CD8-positive, alpha-beta memory T cell (primary cell): ENCODE measurements at regions of chr22 and their contacts with region 1.

Region 1: GRCh38 chr22:33741025-33741424 is 179.3 kb downstream of the LARGE1 start:
- DNase-seq: no peak
- H3K4me3 ChIP-seq: no peak overlapping the region
- H3K4me3 Mint-ChIP-seq: no peak overlapping the region
- H3K27ac ChIP-seq: no peak overlapping the region
- H3K27ac Mint-ChIP-seq: no peak overlapping the region
- H3K4me1 ChIP-seq: no peaks in the 10 kb centered on the region
- H3K4me1 Mint-ChIP-seq: no peaks in the 10 kb centered on the region
- H3K27me3 ChIP-seq: no peaks in the 10 kb centered on the region
- H3K27me3 Mint-ChIP-seq: no peaks in the 10 kb centered on the region

Region 2: DNA sequence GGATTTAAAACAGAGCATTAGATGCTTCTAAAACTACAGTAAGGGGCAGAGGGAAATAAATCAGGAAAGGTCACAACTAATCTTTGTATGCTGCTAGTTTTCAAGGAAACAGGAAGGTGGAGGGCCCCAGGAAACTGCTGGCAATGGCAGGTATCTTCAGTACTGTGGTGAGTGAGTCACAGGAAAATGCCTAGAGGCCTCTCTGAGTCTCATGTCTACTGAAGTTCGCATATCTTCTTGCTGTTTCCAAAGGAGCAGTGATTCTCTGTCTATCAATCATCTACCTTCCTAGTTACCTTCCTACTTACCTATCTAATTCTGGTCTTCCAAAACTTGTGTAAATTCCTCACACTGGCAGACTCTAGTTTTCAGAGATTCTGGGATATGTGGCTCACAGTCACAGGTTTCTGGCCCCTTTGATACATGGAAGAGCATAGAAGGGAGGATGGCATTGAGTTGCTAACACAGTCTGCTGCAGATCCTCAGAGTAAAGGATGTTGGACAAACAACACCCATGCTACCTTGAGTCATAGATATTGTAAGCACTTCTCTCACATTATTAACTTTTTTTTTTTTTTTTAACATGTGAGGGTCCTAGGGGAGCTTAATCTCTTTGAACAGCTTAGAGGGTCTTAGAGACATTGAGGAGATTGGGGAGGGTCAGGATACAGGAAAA is 624.0 kb before region 1 on chr22:
- CTCF ChIA-PET with region 1: no interaction called
- POLR2A ChIA-PET with region 1: interaction called, 10 read pairs
- DNase-seq: no peak
- H3K4me3 ChIP-seq: no peak overlapping the region
- H3K4me3 Mint-ChIP-seq: no peak overlapping the region
- H3K27ac ChIP-seq: no peak overlapping the region
- H3K27ac Mint-ChIP-seq: no peak overlapping the region
- H3K4me1 ChIP-seq: no peaks in the 10 kb centered on the region
- H3K4me1 Mint-ChIP-seq: no peaks in the 10 kb centered on the region
- H3K27me3 ChIP-seq: no peaks in the 10 kb centered on the region
- H3K27me3 Mint-ChIP-seq: no peaks in the 10 kb centered on the region